Posterior vena cava (tissue), 2 donors: ENCODE measurements at regions of chr22 and their contacts with region 1.

Region 1: DNA sequence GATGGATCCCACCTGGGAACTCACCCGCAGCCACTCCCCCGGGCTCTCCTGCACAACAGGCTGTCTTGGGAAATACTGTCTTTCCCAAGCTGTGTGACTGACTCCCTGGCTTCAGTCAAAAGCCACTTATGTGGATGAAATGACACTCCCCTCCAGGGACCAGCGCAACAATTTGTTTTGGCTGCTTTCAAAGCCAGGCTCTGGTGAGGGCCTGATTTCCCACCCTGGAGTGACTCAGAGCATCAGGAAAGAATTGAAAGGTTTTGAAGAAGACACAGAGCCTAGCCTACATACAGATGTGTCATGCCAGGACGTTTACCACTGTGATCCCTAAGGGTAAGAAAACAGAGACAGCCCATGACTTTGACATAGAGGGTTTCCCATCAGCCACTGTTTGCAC is 550.5 kb downstream of the MIAT start:
- DNase-seq: no peak

Region 2: GRCh38 chr22:27124351-27124966 is 83.4 kb before region 1 on chr22:
- intact Hi-C with region 1: no loop called
- DNase-seq: peak; percentile 82

Region 3: DNA sequence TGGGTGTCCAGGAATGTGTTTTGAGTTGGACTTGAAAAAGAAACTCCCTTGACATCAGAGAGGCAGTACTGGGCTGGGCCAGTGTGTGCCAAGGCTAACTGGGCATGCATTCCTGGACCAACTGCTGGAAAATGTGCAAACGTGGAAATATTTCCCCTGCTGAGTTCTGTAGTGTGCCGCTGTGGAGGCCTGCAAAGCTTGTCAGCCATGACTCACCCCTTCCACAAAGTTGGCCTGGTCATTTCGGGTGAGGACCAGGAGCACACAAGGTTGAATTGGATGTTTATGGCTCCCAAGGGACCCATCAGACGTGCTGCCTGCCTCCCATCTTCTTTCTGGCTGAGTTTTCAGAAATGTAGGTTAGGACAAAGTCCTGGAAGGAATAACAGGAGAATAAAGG is 37.4 kb before region 1 on chr22:
- intact Hi-C with region 1: loop called in 1 of 2 experiments (anchors 1 kb)
- DNase-seq: peak; percentile 85

Region 4: DNA sequence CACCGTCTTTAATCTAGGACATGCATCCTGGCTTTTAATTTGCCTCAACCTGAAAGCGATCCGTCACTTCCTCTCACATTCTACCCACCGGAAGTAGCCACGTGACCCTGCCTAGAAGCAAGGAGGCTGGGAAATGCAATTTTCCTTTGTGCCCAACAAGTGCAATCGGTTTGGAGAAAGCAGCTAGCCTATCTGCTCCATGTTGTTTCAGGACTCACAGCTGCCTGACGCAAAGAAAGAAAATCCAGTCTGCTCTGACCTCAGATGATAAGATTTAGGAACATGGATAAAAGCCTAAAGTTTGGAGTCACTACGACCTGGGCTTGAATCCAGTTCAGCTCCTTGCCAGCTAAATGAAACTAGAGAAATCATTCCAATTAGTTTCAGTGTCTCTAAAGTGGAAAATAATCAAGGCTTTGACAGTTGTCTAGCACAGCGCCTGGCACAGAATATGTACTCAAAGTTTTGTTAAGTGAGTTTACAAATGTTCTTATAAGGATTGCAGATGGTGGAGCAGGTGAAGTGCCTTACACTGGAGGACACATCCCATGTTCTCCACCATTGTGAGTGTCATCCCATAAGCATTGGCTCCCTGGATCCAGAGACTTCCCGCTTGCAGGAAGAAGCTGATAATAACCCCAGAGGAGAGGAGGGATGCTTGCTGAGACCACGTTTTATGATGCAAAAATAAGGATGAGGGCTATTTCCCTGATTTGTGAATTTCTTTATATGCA is 40.0 kb after region 1 on chr22:
- intact Hi-C with region 1: loop called in 1 of 2 experiments (anchors 1 kb)
- DNase-seq: no peak